Breast epithelium (tissue), 4 donors: ENCODE measurements at regions of chr21 and their contacts with region 1.

Region 1: DNA sequence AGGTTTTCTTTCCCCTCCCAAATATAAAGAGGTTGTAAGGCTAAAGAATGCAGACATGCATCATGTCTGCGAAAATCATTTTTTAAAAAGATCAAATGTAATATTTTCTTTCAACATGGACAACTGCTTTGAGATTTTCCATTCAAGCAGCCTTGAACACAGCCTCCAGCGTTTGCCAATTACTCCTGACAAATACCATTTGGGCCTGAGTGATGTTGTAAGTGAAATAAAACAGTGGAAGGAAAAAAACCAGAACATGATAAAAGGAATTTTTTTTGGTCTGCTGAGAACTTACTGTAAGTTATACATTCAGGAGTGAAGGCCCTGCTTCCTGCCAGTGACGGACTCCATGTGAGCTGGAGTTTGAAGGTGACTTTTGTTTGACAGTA is 37.2 kb downstream of the SETD4 start:
- DNase-seq: no peak
- H3K4me3 ChIP-seq: no peak overlapping the region
- H3K27ac ChIP-seq: no peak overlapping the region
- H3K4me1 ChIP-seq: no peaks in the 10 kb centered on the region
- H3K27me3 ChIP-seq: no peaks in the 10 kb centered on the region
- CTCF ChIP-seq: no peak
- POLR2A ChIP-seq: no peak

Region 2: DNA sequence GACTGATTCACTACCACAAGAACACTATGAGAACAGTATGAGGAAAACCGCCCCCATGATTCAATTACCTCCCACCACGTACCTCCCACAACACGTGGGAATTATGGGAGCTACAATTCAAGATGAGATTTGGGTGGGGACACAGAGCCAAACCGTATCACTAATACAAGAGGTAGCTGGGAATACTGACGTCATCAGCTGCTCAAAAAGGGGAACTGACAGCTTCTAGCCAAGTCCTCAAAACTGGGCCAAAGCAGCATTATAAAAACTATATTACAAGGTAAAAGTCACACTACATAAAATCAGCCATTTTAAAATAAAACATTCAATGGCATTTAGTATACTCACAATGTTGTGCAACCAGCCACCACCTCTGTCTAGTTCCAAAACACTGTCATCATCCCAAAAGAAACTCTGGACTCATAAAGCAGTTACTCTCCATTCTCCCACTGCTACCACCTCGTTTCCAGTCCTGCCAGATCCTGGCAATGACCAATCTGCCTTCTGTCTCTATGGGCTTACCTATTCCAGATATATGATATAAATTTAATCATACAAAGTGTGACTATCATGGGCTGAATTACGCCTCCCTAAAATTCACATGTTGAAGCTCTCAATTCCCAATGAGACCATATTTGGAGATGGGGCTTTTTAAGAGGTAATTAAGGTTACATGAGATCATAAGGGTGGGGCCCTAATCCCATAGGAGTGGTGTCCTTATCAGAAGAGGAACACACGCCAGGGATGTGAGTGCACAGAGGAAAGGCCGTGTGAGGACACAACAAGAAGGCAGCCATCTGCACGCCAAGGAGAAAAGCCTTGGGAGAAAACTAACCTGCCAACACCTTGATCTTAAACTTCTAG is 154.8 kb before region 1 on chr21:
- intact Hi-C with region 1: no loop called
- DNase-seq: no peak
- H3K4me3 ChIP-seq: no peak overlapping the region
- H3K27ac ChIP-seq: peak overlapping the region in 1 of 2 donors; percentile 40
- H3K4me1 ChIP-seq: no peaks in the 10 kb centered on the region
- H3K27me3 ChIP-seq: no peaks in the 10 kb centered on the region
- CTCF ChIP-seq: no peak
- POLR2A ChIP-seq: no peak

Region 3: GRCh38 chr21:36048357-36048756 is 25.3 kb after region 1 on chr21:
- intact Hi-C with region 1: loop called (anchors 2 kb)
- DNase-seq: peak in 1 of 2 donors; percentile 0
- H3K4me3 ChIP-seq: no peak overlapping the region
- H3K27ac ChIP-seq: no peak overlapping the region
- H3K4me1 ChIP-seq: no peaks in the 10 kb centered on the region
- H3K27me3 ChIP-seq: no peaks in the 10 kb centered on the region
- CTCF ChIP-seq: no peak
- POLR2A ChIP-seq: no peak